Dendritic cell treated with granulocyte-macrophage colony-stimulating factor and Interleukin-4, amounts not matched to agents 40 ng/mL and 50 ng/mL, for 4 days (primary cell): ENCODE measurements at regions of chr7 and their contacts with region 1.

Region 1: DNA sequence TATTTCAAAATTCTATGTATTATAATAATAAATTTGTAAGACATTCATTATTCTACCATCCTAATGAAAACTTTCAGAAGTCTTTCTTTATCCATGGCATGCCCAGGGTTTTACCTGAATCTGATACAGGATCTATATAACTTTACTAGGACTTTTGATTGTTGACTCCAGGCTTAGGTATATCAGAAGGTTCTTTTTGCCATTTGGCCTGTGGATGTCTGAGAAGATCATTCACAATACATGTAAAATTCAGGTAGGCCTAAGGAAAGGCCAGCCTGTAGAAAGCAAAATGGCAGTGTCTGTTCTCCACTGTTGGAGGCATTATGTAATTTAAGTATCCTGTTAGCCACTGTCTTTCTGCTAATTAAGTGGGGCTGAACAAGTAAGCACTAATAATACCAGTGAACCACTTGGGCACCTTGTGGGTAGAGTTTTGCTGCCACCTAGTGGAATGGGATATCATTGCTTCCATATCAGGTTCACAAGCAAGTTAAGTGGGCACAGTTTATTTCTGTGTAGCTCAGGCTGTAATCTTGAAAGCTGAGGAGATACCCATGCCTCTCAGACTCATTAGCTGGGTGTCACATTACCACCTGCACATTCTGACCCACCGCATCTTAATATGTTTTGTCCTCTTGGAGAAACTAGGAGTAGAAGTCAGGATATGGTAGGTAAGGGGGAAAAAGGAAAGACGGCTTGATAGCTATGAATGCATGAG is 105.5 kb downstream of the SEPTIN7 start:
- H3K4me3 Mint-ChIP-seq: no peak overlapping the region
- H3K27ac Mint-ChIP-seq: no peak overlapping the region
- H3K4me1 Mint-ChIP-seq: no peaks in the 10 kb centered on the region
- H3K27me3 Mint-ChIP-seq: no peaks in the 10 kb centered on the region

Region 2: DNA sequence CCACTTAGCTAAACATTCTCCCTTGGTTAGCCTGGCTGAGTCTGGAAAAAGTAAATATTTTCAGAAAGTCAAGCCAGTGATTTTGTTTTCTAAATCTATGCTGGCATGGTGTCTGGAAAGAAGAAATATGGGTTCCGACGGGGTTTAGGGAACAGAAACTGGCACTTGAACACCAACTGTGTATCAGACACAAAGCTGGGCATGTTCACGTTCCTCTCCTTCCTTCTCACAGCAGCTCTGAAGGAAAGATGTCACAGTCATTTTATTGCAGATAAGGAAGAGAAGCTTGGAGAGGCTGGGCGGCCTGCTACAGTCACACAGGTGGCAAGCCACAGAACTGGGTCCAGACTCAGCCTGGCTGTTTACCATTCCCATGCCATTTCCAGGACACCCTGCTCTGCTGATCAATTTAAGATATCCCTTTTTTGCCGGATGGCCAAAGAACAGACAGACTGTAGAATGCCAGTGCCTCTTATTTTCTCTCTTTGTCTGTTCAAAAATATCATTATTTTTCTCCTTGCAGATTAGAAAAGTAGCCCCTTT is 330.2 kb before region 1 on chr7:
- intact Hi-C with region 1: no loop called
- H3K4me3 Mint-ChIP-seq: no peak overlapping the region
- H3K27ac Mint-ChIP-seq: no peak overlapping the region
- H3K4me1 Mint-ChIP-seq: peaks cover 26% of the 10 kb centered on the region
- H3K27me3 Mint-ChIP-seq: peaks cover 42% of the 10 kb centered on the region

Region 3: DNA sequence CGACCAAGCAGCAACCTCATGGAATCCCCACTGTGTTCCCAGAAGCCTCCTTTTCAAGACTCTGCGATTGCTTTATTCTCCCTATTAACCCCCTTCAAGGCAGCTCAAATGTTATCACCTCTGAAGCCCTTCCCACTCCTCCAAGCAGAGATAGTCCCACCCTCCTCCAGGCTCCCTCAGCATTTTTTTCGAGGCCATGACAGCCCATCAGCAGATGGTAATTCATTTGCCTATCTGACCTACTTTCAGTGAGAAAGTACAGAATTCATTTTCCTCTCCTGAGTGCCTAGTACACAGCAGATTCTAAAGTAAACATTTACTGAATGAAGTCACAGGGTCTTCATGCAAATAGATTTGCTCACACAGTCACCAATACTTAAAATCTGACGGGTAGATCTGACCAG is 259.2 kb before region 1 on chr7:
- intact Hi-C with region 1: loop called (anchors 10 kb)
- H3K4me3 Mint-ChIP-seq: no peak overlapping the region
- H3K27ac Mint-ChIP-seq: peak overlapping the region; percentile 33
- H3K4me1 Mint-ChIP-seq: peaks cover 44% of the 10 kb centered on the region
- H3K27me3 Mint-ChIP-seq: no peaks in the 10 kb centered on the region

Region 4: GRCh38 chr7:35707422-35707821 is 198.9 kb before region 1 on chr7:
- intact Hi-C with region 1: loop called (anchors 2 kb)
- H3K4me3 Mint-ChIP-seq: no peak overlapping the region
- H3K27ac Mint-ChIP-seq: peak overlapping the region; percentile 23
- H3K4me1 Mint-ChIP-seq: peaks cover 11% of the 10 kb centered on the region
- H3K27me3 Mint-ChIP-seq: peaks cover 5% of the 10 kb centered on the region